Activated CD4-positive, alpha-beta T cell treated with anti-CD3 and anti-CD28 coated beads, Interleukin-2, amount 10 ng/mL, durations not matched to agents 7 days and 5 days (primary cell): ENCODE measurements at regions of chr11 and their contacts with region 1.

Region 1: DNA sequence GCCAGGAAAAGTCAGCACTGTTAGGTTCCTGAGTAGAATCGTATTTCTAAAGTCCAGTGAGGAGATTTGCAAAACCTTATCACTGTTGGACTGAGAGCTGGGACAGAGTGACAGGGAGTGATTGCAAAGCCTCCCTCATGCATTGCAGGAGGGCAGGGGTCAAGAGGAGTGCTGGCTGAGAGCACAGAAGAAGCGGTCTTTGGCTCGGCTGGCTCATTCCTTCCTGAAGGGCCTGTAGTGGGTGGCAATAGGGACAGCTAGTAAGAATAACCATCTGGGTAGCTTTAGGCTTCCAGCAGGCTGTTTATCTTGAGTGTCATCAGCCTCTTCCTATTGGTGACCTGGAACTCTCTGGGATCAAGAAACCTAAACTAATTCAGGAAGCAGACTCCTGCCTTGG is 53.4 kb downstream of the CD44 start:
- DNase-seq: no peak
- H3K4me3 Mint-ChIP-seq: no peak overlapping the region
- H3K27ac Mint-ChIP-seq: no peak overlapping the region
- H3K4me1 Mint-ChIP-seq: peaks cover 68% of the 10 kb centered on the region
- H3K27me3 Mint-ChIP-seq: no peaks in the 10 kb centered on the region

Region 2: DNA sequence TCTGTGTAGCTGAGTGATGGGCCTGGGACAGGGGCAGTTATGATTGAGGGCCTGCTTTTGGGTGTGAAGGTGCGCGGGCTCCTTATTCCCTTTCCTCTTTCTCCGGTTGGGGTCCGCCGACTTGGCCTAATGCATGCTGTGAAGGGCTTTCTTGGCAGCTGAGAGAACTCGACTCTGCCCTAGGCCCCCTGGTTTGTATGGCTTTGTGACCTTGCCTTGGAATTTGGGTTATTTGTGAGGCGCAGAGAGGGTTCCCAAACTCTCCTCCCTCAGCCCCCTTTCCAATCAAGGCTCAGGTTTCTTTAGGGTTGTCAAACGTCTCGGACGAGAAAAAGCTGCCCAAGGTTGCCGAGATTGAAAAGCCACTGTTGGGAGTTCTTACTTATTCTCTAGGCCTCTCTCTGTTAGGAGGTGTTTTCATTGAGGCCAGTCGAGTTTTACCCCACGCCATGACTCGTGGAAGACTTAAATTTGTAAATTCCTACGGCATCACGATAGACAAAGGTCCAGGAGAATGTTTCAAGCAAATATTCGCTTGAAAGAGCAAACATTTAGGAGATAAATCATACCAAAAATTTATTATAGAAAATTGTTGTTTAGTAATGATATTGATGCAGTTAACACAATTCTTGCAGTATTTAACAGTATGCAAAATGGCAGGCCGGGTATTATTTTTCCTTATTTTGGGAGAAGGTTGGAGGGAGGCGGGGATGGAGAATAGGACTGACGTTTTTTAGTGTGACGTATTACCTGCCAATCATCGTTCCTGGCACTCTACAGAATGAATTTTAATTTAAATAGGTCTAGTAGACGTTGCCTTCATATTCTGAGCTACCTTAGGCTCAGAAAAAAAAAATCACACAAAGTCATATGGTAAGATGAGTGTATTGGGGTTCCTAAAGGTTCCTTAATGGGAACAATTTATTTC is 275.2 kb before region 1 on chr11:
- CTCF ChIA-PET with region 1: no interaction called
- POLR2A ChIA-PET with region 1: interaction called, 10 read pairs
- DNase-seq: no peak
- H3K4me3 Mint-ChIP-seq: peak overlapping the region; percentile 98
- H3K27ac Mint-ChIP-seq: peak overlapping the region; percentile 97
- H3K4me1 Mint-ChIP-seq: peaks cover 31% of the 10 kb centered on the region
- H3K27me3 Mint-ChIP-seq: no peaks in the 10 kb centered on the region